A673 (cell line): ENCODE measurements at regions of chr3 and their contacts with region 1.

Region 1: DNA sequence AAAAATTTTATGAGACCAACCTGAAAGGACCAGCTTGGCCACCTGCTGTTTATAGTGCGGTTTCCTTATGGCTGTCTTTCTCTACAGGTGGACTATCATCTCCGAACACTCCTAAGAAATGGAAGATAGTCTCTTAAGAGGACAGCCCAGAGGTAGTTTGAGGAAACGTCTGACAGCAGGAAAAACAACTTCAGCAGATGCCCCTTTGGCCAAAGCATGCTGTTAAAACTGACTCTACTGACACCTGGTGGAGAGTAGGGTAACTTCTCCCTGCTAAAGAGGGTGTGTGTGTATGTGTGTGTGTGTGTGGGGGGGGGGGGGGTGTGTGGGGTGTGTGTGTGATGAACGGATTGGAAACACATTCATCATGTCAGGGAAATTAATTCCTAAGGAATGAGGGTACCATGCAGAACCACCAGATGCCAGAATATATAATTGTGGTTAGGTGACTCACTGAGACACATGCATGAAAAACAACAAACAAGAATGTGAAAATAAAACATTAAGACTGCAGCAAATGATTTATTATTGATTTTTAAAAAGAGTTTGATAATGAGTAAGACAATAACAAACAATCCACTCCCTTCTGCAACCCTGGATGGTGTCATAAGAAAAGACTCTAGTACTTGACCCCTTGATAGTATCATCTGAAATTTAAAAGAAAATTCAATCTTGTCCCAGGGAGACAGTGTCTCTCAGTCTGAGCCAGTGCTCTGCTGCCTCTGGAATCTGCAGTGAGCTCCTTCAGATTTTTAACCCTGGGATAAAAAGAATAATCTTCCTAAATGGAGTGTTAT is 256.5 kb downstream of the THRB start:
- DNase-seq: peak; percentile 82
- H3K4me3 ChIP-seq: no peak overlapping the region
- H3K27ac ChIP-seq: no peak overlapping the region
- H3K4me1 ChIP-seq: peaks cover 14% of the 10 kb centered on the region
- H3K27me3 ChIP-seq: no peaks in the 10 kb centered on the region
- CTCF ChIP-seq: peak; percentile 75

Region 2: DNA sequence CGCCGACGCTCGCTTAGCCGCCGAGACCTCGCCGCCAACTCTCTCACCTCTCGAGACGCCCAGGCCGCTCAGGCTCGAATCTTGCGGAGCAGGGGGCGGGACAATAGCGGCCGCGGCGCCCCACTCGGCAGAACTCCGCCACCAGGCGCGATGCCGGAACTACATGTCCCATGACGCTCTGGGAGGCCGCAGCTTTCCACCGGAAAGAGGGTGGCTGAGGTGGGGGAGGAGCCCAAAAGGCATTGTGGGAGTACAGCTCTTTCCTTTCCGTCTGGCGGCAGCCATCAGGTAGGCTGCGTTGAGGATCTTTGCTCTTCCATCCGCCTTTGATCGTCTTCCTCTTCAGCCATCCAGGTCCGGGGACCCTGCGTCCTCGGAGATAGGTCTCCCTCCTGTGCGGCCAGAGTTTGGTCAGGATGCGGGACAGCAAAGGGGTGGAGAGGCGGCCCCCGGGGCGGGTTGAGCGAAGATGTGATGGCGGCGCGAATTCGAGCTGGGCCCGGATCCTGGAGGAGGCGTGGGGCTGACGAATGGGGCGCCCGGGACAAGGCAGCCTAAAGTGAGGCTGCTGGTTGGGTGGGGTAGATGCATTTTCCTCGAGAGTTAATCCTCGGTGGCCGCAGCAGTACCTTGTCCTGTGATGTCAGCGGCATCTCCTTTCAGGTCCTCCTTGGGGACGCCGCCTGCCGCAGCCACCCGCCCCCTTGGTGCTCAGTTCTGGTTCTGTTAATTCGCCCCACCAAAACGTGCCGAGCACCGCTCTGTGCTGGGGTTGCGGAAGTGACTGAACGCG is 321.1 kb before region 1 on chr3 and contains the starts of genes NKIRAS1 and RPL15:
- CTCF ChIA-PET with region 1: no interaction called
- POLR2A ChIA-PET with region 1: interaction called, 11 read pairs
- intact Hi-C with region 1: loop called (anchors 10 kb)
- DNase-seq: peak; percentile 99
- H3K4me3 ChIP-seq: peak within 1 kb of the TSS; percentile 87
- H3K27ac ChIP-seq: peak within 1 kb of the TSS; percentile 92
- H3K4me1 ChIP-seq: peaks cover 10% of the 10 kb centered on the region
- H3K27me3 ChIP-seq: no peaks in the 10 kb centered on the region
- CTCF ChIP-seq: peak; percentile 30; the same call in 1 of the 2 replicates
- total RNA-seq, gene NKIRAS1: 17.9 and 23.0 TPM in 2 replicates
- total RNA-seq, gene RPL15: 1,911 and 1,939 TPM in 2 replicates

Region 3: DNA sequence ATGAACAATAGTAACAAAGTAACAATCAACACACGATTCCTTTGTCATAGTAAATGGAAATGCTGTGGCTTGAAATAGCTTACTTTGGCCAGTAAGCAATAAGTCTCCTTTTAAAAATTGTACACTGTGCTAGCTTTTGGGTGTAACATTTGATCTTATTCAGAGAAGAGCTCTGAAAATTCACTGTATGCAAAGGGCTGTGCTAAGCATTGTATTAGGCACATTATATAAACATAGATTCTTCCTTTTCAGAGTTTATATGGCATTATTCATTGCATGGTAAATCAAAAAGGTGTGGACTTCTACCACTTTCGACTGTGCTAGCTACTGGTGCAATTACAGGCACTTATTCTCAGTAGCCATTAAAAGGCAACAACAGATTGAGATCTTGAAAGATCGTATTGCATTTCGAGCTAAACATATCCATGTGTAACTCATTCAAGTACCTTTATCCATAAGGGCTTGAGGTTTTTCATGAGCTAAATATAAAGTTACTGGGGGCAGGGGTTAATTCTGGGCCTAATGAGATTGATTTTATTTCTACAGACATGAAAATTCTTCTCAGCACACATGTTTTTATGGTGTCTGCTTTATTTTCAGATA is 46.3 kb before region 1 on chr3:
- CTCF ChIA-PET with region 1: no interaction called
- POLR2A ChIA-PET with region 1: no interaction called
- intact Hi-C with region 1: loop called (anchors 2 kb)
- DNase-seq: no peak
- H3K4me3 ChIP-seq: no peak overlapping the region
- H3K27ac ChIP-seq: no peak overlapping the region
- H3K4me1 ChIP-seq: no peaks in the 10 kb centered on the region
- H3K27me3 ChIP-seq: peaks cover 4% of the 10 kb centered on the region
- CTCF ChIP-seq: no peak